Pancreas (tissue), 10 donors: ENCODE measurements at regions of chr6 and their contacts with region 1.

Region 1: DNA sequence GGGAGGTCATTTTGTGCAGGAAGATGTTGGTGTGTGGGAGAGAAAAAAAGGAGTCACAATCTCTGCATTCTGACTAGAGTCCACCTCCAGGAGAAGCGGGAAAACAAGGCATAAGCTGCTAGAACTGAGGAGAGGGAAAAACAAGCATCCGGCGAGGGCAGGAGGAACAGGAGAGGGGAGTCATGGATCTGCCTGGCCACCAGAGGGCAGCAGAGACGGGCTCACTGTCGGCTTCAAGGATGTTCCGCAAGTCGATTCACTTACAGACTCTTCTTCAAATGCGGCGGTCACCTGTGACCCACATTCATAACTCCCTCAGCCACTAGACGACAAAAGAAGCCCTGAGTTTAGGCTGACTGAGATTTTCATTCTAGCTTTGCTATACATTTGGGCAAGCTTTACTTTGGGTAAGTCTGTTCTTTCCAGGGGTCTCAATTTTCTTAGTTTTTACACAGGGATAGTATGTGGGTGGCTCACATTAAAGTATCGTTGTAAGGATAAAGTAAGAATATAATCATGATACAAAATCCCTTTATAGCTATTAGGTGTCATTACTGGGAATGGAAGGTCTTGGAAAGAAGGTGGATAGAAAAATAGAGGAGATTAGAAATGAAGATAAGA is 6.6 kb upstream of the BTNL2 start:
- DNase-seq: peak; percentile 47 to 92 (median 78)
- ATAC-seq: peak; percentile 85 to 95 (median 92)
- H3K4me3 ChIP-seq: no peak overlapping the region
- H3K27ac ChIP-seq: no peak overlapping the region
- H3K4me1 ChIP-seq: no peaks in the 10 kb centered on the region
- H3K27me3 ChIP-seq: peaks cover 0 to 28% (median 4%) of the 10 kb centered on the region in 4 donors
- CTCF ChIP-seq: peak; percentile 87 to 95 (median 92)

Region 2: DNA sequence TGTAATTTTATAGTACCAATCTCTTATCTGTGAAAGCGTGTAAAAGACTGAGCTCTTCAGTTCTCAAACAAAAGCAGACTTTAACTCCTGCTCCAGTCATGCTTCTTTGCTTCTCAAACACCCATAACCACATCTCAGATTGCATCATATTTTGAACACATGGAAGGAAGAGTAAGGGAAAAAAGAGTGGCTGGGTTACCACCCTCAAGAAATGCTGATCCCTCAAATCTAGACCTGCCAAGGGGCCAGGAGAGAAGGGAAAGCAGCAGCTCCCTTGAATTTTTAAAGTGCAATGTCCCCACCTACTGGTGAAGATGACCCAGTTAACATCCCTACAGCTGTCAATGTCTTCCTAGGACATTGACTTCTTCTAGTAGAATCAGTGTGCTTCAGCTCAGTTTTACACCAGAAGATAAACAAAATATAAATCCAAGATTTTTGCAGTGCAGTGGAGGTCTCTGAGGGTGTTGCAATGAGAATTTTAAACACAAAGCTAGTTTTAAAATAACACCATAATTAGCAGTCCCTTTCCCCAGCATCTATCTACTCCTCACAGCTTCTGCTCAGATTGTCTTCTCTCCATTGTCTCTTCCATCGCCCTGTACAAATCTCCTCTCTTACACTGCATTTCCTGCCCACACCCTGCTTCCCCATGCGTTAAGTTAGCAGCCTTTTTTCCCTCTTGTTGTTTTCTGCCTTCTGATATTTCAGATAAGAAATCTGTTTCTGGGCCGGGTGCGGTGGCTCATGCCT is 372.4 kb after region 1 on chr6:
- intact Hi-C with region 1: loop called in 1 of 3 experiments (anchors 5 kb)
- DNase-seq: peak in 2 of 6 donors; percentile 16 to 30
- ATAC-seq: peak in 3 of 4 donors; percentile 74 to 94 (median 87)
- H3K4me3 ChIP-seq: no peak overlapping the region
- H3K27ac ChIP-seq: no peak overlapping the region
- H3K4me1 ChIP-seq: no peaks in the 10 kb centered on the region
- H3K27me3 ChIP-seq: peaks cover 0 to 3% (median 0%) of the 10 kb centered on the region in 4 donors
- CTCF ChIP-seq: peak in 3 of 4 donors; percentile 17 to 24 (median 22)